MCF 10A (cell line): ENCODE measurements at regions of chr18 and their contacts with region 1.

Region 1: DNA sequence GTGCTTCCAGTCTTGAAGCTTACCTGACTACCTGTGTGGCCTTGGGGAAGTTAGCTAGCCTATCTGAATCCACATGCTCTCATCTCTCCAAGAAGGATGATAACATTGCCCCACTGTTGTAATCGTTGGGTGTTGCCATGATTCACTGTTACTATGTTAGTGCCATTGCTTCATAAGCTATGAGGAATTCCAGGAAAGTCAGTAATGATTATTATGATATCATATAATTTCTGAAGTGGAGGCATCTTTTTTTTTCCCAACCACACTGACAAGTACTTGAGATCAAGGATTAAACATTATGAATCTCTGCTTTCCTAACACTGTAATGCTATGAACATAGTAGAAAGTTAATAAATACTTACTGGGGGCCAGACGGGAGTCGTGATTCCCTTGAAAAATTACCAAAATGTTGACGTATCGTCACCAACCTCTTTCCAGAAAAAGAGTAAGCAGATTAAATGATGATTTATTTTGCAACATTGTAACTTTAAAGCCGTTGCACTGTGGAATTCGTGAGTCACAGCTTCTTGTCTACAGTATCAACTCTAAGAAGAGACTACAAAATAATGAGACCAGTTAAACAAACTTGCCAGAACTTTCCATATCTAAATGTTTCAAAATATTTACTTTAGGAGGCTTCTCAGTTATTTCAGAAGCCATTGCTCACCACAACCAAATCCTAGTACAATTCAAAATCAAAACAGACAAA is 459.9 kb downstream of the PIK3C3 start:
- DNase-seq: peak; percentile 90
- H3K4me3 Mint-ChIP-seq: no peak overlapping the region
- H3K27ac Mint-ChIP-seq: peak overlapping the region; percentile 55
- H3K4me1 Mint-ChIP-seq: peaks cover 31% of the 10 kb centered on the region
- H3K27me3 Mint-ChIP-seq: no peaks in the 10 kb centered on the region
- CTCF ChIP-seq: no peak

Region 2: DNA sequence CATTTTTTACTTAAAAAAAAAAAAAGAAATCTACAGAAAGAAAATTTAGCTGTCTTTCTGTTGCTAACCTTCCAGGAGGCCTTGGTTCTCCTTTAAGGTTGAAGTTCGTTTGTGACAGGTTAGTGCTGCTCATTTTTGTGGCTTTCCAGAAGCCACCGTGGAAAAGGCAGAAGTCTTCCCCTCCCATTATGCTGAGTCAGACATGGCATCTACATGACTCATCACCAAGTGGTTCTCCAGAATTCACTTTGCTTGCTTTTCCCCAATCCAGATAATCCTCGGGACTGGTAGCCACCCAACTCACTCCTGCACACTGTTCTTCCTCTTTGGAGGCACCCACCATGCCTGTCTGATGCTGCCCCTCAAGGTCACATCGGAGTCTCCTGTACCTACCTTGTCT is 231.2 kb before region 1 on chr18:
- CTCF ChIA-PET with region 1: no interaction called
- POLR2A ChIA-PET with region 1: no interaction called
- intact Hi-C with region 1: no loop called
- DNase-seq: peak; percentile 79
- H3K4me3 Mint-ChIP-seq: no peak overlapping the region
- H3K27ac Mint-ChIP-seq: no peak overlapping the region
- H3K4me1 Mint-ChIP-seq: peaks cover 23% of the 10 kb centered on the region
- H3K27me3 Mint-ChIP-seq: no peaks in the 10 kb centered on the region
- CTCF ChIP-seq: no peak

Region 3: GRCh38 chr18:42310956-42311355 is 103.9 kb before region 1 on chr18:
- CTCF ChIA-PET with region 1: no interaction called
- POLR2A ChIA-PET with region 1: interaction called, 3 read pairs
- intact Hi-C with region 1: loop called (anchors 2 kb)
- DNase-seq: peak; percentile 90
- H3K4me3 Mint-ChIP-seq: no peak overlapping the region
- H3K27ac Mint-ChIP-seq: no peak overlapping the region
- H3K4me1 Mint-ChIP-seq: peaks cover 20% of the 10 kb centered on the region
- H3K27me3 Mint-ChIP-seq: peaks cover 6% of the 10 kb centered on the region
- CTCF ChIP-seq: no peak

Region 4: DNA sequence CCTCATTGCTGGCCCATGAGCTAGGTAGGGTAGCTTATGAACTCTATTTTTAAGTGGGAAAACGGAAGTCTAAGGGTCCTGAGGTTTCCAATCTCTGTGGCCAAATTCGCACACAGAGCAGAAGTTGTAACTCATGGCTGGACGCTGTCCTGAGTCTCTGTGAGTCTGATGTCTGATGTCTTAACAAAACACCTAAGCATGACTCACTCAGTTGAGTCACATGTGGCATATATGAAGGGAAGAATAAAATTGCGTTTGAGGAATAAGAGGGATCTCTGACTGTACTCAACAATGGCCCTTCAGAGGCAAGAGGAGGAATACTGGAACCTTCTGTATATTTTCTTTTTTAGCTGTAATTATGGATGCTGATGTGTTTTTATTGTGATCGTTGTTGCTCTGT is 130.9 kb after region 1 on chr18:
- CTCF ChIA-PET with region 1: no interaction called
- POLR2A ChIA-PET with region 1: no interaction called
- intact Hi-C with region 1: loop called (anchors 10 kb)
- DNase-seq: peak; percentile 90
- H3K4me3 Mint-ChIP-seq: no peak overlapping the region
- H3K27ac Mint-ChIP-seq: no peak overlapping the region
- H3K4me1 Mint-ChIP-seq: peaks cover 6% of the 10 kb centered on the region
- H3K27me3 Mint-ChIP-seq: no peaks in the 10 kb centered on the region
- CTCF ChIP-seq: no peak